Activated CD4-positive, alpha-beta T cell treated with anti-CD3 and anti-CD28 coated beads for 36 hours (primary cell): ENCODE measurements at regions of chr7 and their contacts with region 1.

Region 1: GRCh38 chr7:47482013-47482875 is 99.7 kb downstream of the TNS3 start:
- DNase-seq: peak; percentile 65
- ATAC-seq: peak; percentile 76
- H3K4me3 Mint-ChIP-seq: no peak overlapping the region
- H3K27ac Mint-ChIP-seq: no peak overlapping the region
- H3K4me1 Mint-ChIP-seq: peaks cover 16% of the 10 kb centered on the region
- H3K27me3 Mint-ChIP-seq: peaks cover 2% of the 10 kb centered on the region

Region 2: DNA sequence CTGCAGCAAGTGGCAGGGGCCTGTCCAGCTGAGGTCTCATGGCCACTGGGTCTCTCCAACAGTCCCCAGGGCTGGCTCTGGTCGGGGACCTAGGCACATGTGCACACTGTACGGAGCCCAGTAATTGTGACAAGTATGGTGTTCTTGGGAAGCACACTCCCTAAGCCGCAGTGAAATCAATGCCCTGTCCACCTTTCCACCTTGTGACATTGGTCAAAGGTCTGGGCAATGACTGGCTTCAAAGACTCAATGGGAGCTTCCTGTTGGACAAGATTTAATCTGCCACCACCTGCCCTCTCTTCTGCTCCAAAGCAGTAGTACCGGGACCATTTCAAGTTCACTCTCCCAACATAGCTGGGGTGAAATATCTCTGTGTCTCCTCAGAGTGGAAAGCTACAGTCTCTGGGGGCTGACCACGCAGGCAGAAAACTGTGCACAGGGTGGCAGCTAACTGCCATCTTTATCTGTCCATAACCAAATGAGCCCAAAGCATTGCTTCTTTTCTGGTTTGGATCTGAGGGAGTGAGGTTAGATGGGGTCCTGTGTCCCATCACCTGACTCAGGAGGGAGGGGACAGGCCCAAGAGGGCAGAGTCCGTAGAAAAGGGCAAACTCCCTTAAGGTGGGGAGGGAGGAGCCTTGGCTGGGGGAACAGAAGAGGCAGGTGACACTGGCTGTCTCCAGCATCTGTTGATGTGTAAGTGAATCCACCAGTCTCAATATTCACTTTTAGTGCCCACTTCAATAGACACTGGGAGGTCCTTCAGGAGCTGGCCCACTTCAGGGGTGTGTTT is 208.1 kb before region 1 on chr7:
- CTCF ChIA-PET with region 1: no interaction called
- POLR2A ChIA-PET with region 1: no interaction called
- intact Hi-C with region 1: no loop called
- DNase-seq: no peak
- ATAC-seq: no peak
- H3K4me3 Mint-ChIP-seq: no peak overlapping the region
- H3K27ac Mint-ChIP-seq: no peak overlapping the region
- H3K4me1 Mint-ChIP-seq: peaks cover 3% of the 10 kb centered on the region
- H3K27me3 Mint-ChIP-seq: no peaks in the 10 kb centered on the region

Region 3: DNA sequence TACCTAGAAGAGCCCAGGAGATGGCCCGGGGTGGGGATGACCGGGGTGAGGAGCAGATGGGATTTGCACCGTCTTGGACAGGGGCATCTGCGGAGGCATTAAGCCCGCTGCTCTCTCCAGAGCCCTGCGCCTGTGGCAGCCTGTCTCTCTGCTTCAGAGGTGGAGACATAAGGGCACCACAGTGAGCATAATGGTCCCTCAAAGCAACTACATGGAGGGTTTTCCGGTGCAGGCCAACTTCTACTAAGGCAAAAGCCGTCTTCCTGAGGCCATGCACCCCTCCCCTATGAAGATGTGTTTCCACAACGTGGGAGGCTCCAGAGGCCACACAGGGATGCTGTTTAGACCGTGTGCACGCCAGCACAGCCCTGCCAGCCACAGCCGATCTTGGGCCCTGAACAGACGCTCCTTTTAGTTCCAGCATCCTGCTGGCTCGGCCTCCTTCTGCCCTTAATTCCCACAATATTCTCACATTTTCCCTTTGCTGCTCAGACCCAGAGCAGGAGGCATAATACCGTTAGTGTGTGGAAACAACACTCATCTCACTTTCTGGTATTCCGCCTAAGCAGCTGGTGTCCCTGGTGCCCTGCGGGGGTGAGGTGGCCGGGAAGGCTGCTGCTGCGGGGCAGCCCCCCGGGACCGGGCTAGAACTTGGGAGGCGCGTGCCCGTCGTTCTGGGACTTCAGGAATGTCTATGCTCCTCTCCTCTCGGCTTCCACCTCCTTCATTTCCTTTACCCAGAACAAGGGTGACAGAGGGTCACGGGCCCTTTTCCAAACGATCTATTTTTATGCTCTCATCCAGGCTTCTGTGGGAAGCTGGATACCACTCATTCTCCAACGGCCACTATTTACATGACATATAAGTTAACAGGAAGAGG is 167.3 kb before region 1 on chr7:
- CTCF ChIA-PET with region 1: no interaction called
- POLR2A ChIA-PET with region 1: no interaction called
- intact Hi-C with region 1: no loop called
- DNase-seq: no peak
- ATAC-seq: no peak
- H3K4me3 Mint-ChIP-seq: no peak overlapping the region
- H3K27ac Mint-ChIP-seq: no peak overlapping the region
- H3K4me1 Mint-ChIP-seq: peaks cover 3% of the 10 kb centered on the region
- H3K27me3 Mint-ChIP-seq: peaks cover 3% of the 10 kb centered on the region

Region 4: DNA sequence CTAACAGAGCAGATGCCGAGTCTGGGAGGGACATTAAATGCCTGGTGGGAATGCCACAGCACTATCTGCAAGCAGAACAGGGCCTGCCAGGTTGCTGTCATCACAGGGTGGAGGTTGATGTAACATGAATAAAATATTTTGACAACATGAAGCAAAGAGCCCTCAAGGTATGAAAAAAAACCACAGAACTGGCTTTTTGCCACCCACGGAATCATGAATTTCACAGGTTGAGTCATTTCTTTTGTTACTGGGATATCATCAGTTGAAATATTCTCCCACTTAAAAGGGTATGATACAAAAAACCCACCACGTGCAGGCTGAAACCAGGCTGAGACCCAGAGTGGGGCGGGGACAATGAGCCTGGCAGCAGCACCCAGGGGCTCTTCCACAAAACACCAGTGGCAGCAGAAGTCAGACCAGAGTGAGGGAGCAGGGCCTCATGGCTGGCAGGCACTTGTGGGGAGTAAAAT is 120.5 kb before region 1 on chr7:
- CTCF ChIA-PET with region 1: no interaction called
- POLR2A ChIA-PET with region 1: no interaction called
- intact Hi-C with region 1: loop called in 1 of 2 experiments (anchors 2 kb)
- DNase-seq: peak; percentile 75
- ATAC-seq: peak; percentile 90
- H3K4me3 Mint-ChIP-seq: no peak overlapping the region
- H3K27ac Mint-ChIP-seq: peak overlapping the region; percentile 43
- H3K4me1 Mint-ChIP-seq: no peaks in the 10 kb centered on the region
- H3K27me3 Mint-ChIP-seq: no peaks in the 10 kb centered on the region

Region 5: GRCh38 chr7:48595756-48596155 is 1113.5 kb after region 1 on chr7:
- CTCF ChIA-PET with region 1: no interaction called
- POLR2A ChIA-PET with region 1: no interaction called
- intact Hi-C with region 1: no loop called
- DNase-seq: no peak
- ATAC-seq: no peak
- H3K4me3 Mint-ChIP-seq: no peak overlapping the region
- H3K27ac Mint-ChIP-seq: no peak overlapping the region
- H3K4me1 Mint-ChIP-seq: no peaks in the 10 kb centered on the region
- H3K27me3 Mint-ChIP-seq: no peaks in the 10 kb centered on the region